ENCODE measurements at regions of chr3 and their contacts with region 1.

Region 1: DNA sequence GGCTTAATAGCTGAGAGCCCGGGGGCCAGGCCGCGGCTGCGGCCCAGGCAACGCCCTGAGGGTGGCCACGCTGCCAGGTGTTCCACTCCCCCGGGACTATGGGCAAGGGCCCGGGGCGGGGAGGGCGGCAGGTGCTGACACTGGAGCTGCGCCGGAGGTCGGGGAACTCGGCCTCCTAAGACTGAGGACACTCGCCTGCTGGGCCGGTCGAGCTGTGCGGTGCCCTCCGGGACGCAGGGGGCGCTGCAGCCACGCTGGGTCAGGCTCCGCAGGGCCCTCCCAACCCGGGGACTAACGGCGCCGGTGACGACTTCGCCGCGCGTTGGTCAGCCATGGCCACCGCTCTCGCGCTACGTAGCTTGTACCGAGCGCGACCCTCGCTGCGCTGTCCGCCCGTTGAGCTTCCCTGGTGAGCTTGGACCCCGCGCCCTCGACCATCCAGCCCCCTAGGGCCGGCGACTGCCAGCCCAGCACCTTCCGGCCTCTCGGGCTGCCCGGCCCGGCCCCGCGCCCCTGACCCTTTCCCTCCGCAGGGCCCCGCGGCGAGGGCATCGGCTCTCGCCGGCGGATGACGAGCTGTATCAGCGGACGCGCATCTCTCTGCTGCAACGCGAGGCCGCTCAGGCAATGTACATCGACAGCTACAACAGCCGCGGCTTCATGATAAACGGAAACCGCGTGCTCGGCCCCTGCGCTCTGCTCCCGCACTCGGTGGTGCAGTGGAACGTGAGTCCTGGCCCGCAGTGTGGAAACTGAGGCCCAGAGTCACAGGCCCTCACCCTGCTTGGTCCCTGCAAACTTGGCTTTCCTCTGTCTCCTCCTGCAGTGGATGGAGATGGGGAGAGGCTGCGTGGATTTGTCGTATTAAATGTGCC is at the start of gene NDUFAF3:
- DNase-seq: no peak
- H3K4me3 ChIP-seq: peak within 1 kb of the TSS; percentile 94
- CTCF ChIP-seq: peak; percentile 99

Region 2: DNA sequence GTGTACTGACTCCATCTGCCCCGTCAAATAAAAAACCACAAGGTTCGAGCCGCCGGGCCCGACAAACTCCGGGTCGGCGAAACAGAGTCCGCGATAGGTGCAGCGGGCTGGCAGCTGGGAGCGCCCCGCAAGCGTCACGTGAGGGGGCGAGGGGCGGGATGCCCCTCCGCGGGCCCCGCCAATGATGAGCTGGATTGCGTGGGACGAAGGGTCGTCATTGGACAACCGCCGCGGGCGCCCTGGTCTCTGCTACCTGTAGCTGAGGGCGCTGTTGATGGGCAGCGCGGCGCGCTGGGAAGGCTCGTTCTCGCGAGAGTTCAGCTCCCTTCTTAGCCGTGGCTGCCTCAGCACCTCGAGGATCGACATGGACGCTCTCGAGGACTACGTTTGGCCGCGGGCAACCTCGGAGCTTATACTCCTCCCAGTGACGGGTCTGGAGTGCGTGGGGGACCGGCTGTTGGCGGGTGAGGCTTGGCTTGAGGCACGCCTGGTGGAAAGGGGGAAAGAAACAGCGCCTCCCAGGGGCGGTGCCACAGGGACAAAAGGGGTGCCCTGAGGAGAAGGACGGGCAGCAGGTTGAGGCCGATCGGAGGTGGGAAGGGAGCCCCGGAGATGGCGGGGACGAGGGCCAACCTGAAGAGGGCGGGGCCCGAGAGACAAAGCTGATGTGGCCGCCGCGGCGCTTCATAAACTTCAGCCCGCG is 14.8 kb before region 1 on chr3 and contains the start of gene WDR6:
- CTCF ChIA-PET with region 1: interaction called, 95 read pairs
- POLR2A ChIA-PET with region 1: interaction called, 70 read pairs
- DNase-seq: peak; percentile 83
- H3K4me3 ChIP-seq: peak within 1 kb of the TSS; percentile 97
- CTCF ChIP-seq: peak; percentile 44

Region 3: GRCh38 chr3:49377483-49377882 is 355.4 kb after region 1 on chr3:
- CTCF ChIA-PET with region 1: no interaction called
- POLR2A ChIA-PET with region 1: no interaction called
- DNase-seq: no peak
- H3K4me3 ChIP-seq: no peak overlapping the region
- CTCF ChIP-seq: no peak